Gastrocnemius medialis (tissue), 4 donors: ENCODE measurements at regions of chr6 and their contacts with region 1.

Region 1: GRCh38 chr6:118893807-118894424 is at the start of gene ASF1A:
- DNase-seq: peak; percentile 93 to 96
- ATAC-seq: peak; percentile 87 to 89
- H3K4me3 ChIP-seq: peak within 1 kb of the TSS; percentile 69 to 95 (median 78)
- H3K27ac ChIP-seq: peak within 1 kb of the TSS; percentile 89 to 97 (median 92)
- H3K4me1 ChIP-seq: peaks cover 16 to 31% of the 10 kb centered on the region in 2 donors
- H3K27me3 ChIP-seq: no peaks in the 10 kb centered on the region
- CTCF ChIP-seq: peak in 4 of 5 experiments; percentile 38 to 61 (median 53)
- POLR2A ChIP-seq: peak; percentile 77 to 78
- total RNA-seq, gene ASF1A: 9.7 to 13.9 (median 11.0) TPM

Region 2: GRCh38 chr6:117674991-117675657 is 1218.8 kb before region 1 on chr6 and contains the start of gene NUS1:
- in situ Hi-C with region 1: no loop called
- intact Hi-C with region 1: loop called (anchors 10 kb)
- DNase-seq: peak; percentile 90 to 96
- ATAC-seq: peak; percentile 97 to 98
- H3K4me3 ChIP-seq: peak within 1 kb of the TSS; percentile 65 to 93 (median 76)
- H3K27ac ChIP-seq: peak within 1 kb of the TSS; percentile 84 to 90 (median 89)
- H3K4me1 ChIP-seq: peaks cover 26 to 28% of the 10 kb centered on the region in 2 donors
- H3K27me3 ChIP-seq: no peaks in the 10 kb centered on the region
- CTCF ChIP-seq: peak; percentile 31 to 80 (median 66)
- POLR2A ChIP-seq: peak; percentile 51 to 53
- total RNA-seq, gene NUS1: 7.1 to 10.5 (median 7.6) TPM

Region 3: DNA sequence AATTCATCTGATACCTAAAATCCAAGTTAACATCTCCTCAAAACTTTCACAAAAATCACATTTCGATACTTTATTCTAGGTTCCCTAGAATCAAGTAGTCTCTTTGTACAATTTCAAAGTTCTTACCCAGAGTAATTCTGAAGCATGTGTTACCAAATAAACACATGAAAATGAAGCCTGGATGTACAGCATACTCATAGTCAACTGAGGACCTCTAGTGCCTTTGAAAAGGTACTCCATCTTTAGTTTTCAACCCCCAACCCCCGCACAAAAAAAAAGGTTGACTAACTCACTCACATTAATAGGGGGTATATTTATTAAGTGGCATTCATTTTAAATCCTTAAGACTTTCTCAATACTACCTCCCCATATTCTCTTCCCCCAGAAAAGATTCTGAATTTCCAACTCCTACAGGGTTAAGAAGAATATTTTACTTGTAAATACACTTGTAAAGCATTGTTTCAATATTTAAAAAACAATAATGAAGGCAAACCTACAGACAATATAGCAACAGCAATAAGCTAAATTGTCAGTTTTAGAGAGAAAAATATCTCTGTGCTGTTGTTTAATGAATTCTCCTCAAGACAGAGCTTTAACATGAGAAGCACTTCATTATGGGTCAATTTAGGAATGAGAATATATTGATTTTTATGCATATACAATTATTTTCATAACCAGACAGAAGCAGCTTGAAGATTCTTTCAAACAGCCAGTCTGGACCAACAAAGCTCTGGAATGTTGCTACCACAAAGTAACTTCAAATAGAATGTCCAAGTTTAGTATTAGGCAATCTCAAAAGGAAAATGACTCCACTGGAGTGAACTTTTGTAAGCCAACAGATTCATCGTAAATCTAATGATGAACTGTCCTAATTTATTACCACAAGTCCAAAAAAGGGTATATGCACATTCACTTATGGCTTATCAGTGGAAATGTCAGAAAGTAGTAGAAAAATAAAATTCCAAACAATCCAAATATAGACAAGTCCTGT is 342.6 kb before region 1 on chr6:
- in situ Hi-C with region 1: no loop called
- intact Hi-C with region 1: loop called (anchors 10 kb)
- DNase-seq: no peak
- ATAC-seq: peak; percentile 78 to 81
- H3K4me3 ChIP-seq: peak overlapping the region; percentile 34 to 65 (median 52)
- H3K27ac ChIP-seq: peak overlapping the region; percentile 88 to 95 (median 94)
- H3K4me1 ChIP-seq: peaks cover 58 to 63% of the 10 kb centered on the region in 2 donors
- H3K27me3 ChIP-seq: no peaks in the 10 kb centered on the region
- CTCF ChIP-seq: peak; percentile 56 to 75 (median 72)
- POLR2A ChIP-seq: no peak

Region 4: GRCh38 chr6:118651282-118652050 is 242.4 kb before region 1 on chr6 and contains the start of gene CEP85L:
- in situ Hi-C with region 1: no loop called
- intact Hi-C with region 1: loop called (anchors 10 kb)
- DNase-seq: peak; percentile 83 to 89
- ATAC-seq: peak; percentile 87 to 89
- H3K4me3 ChIP-seq: peak within 1 kb of the TSS; percentile 86 to 100 (median 92)
- H3K27ac ChIP-seq: peak within 1 kb of the TSS; percentile 97 to 100 (median 98)
- H3K4me1 ChIP-seq: peaks cover 26 to 36% of the 10 kb centered on the region in 2 donors
- H3K27me3 ChIP-seq: no peaks in the 10 kb centered on the region
- CTCF ChIP-seq: peak in 3 of 5 experiments; percentile 2 to 44 (median 15)
- POLR2A ChIP-seq: peak; percentile 93 to 95
- total RNA-seq, gene CEP85L: 15.6 to 22.8 (median 21.9) TPM

Region 5: DNA sequence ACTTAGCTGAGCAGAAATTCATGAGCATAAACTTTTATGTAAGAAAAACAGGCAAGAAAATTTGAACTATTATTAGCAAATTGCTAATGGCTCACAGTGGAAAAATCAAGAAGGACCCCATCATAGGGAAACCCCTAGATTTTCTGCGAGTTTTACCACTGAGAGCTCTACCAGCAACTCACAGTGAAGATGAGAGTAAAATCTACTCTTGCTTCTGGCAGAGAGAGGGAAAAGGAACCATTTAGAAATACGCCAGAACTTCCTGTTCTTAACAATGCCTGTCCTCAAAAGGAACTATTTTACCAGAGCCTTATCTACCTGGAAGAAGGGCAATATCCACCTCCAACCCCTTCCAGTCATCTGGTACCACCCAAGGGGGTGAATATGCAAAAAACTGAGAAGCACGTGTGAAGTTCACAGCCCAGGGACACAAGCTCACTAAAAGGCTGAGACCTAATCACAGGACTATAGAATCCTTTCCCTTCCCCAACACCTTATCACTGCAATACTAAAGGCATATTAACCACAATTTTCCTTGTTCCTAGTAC is 34.3 kb before region 1 on chr6:
- in situ Hi-C with region 1: no loop called
- intact Hi-C with region 1: loop called (anchors 2 kb)
- DNase-seq: no peak
- ATAC-seq: no peak
- H3K4me3 ChIP-seq: no peak overlapping the region
- H3K27ac ChIP-seq: no peak overlapping the region
- H3K4me1 ChIP-seq: peaks cover 15 to 18% of the 10 kb centered on the region in 2 donors
- H3K27me3 ChIP-seq: no peaks in the 10 kb centered on the region
- CTCF ChIP-seq: no peak
- POLR2A ChIP-seq: no peak

Region 6: GRCh38 chr6:118934461-118935330 is 40.8 kb after region 1 on chr6 and contains the start of gene MCM9:
- in situ Hi-C with region 1: no loop called
- intact Hi-C with region 1: loop called (anchors 1 kb)
- DNase-seq: peak; percentile 60 to 73
- ATAC-seq: peak; percentile 93
- H3K4me3 ChIP-seq: peak within 1 kb of the TSS; percentile 86 to 98 (median 92)
- H3K27ac ChIP-seq: peak within 1 kb of the TSS; percentile 94 to 98 (median 96)
- H3K4me1 ChIP-seq: peaks cover 6 to 11% of the 10 kb centered on the region in 2 donors
- H3K27me3 ChIP-seq: no peaks in the 10 kb centered on the region
- CTCF ChIP-seq: no peak
- POLR2A ChIP-seq: peak; percentile 57 to 69
- total RNA-seq, gene MCM9: 3.5 to 6.9 (median 5.0) TPM

Region 7: GRCh38 chr6:119110601-119111548 is 217.0 kb after region 1 on chr6:
- in situ Hi-C with region 1: no loop called
- intact Hi-C with region 1: loop called (anchors 1 kb)
- DNase-seq: no peak
- ATAC-seq: peak; percentile 58 to 80
- H3K4me3 ChIP-seq: no peak overlapping the region
- H3K27ac ChIP-seq: no peak overlapping the region
- H3K4me1 ChIP-seq: no peaks in the 10 kb centered on the region
- H3K27me3 ChIP-seq: no peaks in the 10 kb centered on the region
- CTCF ChIP-seq: peak; percentile 44 to 64 (median 56)
- POLR2A ChIP-seq: no peak